MCF 10A (cell line): ENCODE measurements at regions of chr12 and their contacts with region 1.

Region 1: GRCh38 chr12:58761308-58761707 is 159.0 kb downstream of the LRIG3 start:
- DNase-seq: no peak
- H3K4me3 Mint-ChIP-seq: no peak overlapping the region
- H3K27ac Mint-ChIP-seq: no peak overlapping the region
- H3K4me1 Mint-ChIP-seq: peaks cover 6% of the 10 kb centered on the region
- H3K27me3 Mint-ChIP-seq: no peaks in the 10 kb centered on the region
- CTCF ChIP-seq: no peak

Region 2: GRCh38 chr12:58819985-58820384 is 58.7 kb after region 1 on chr12:
- CTCF ChIA-PET with region 1: no interaction called
- POLR2A ChIA-PET with region 1: no interaction called
- intact Hi-C with region 1: loop called (anchors 2 kb)
- DNase-seq: no peak
- H3K4me3 Mint-ChIP-seq: no peak overlapping the region
- H3K27ac Mint-ChIP-seq: no peak overlapping the region
- H3K4me1 Mint-ChIP-seq: no peaks in the 10 kb centered on the region
- H3K27me3 Mint-ChIP-seq: no peaks in the 10 kb centered on the region
- CTCF ChIP-seq: no peak